CD4-positive, alpha-beta T cell (primary cell): ENCODE measurements at regions of chr11 and their contacts with region 1.

Region 1: GRCh38 chr11:9613118-9613829 is 39.8 kb downstream of the WEE1 start:
- DNase-seq: peak; percentile 74 to 90 (median 82)
- ATAC-seq: peak; percentile 46
- H3K4me3 ChIP-seq: peak overlapping the region; percentile 66
- H3K4me3 Mint-ChIP-seq: peak overlapping the region; percentile 95
- H3K27ac ChIP-seq: peak overlapping the region; percentile 71 to 86
- H3K27ac Mint-ChIP-seq: peak overlapping the region; percentile 89
- H3K4me1 ChIP-seq: peaks cover 19% of the 10 kb centered on the region
- H3K4me1 Mint-ChIP-seq: peaks cover 16% of the 10 kb centered on the region
- H3K27me3 ChIP-seq: no peaks in the 10 kb centered on the region
- H3K27me3 Mint-ChIP-seq: no peaks in the 10 kb centered on the region
- CTCF ChIP-seq: peak; percentile 84

Region 2: DNA sequence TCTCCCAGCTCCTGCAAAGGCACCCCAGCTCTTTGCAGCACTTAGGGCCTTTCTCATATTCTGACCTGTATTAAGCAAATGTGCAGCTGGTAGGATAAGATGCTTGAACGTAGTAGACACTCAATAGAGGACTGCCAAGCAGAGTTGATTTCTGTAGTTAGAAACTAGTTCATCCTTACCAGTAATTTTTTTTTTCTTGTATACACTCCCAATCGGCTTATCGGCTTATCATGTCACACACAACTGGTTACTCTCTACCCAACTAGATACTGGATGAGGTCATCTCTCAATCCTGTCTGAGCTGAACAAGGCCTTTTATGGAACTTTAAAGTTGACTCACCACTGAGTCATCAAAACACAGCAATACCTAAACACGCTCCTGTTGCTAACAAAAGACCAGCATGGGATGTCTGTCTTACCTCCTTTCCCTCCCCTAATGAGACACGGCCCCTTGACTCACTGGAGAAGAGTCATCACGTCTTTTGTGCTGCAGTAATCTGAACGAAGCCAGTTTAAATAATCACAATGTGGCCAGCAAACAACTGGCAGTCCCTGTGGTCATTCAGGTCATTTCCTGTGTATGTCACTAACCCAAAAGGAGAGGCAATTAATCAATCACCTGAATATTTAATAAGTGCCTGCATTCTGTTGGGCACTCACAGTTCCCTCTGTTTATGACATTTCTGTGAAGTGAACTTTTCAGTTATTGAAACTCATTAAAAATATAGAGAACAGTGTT is 47.3 kb before region 1 on chr11:
- CTCF ChIA-PET with region 1: interaction called, 31 read pairs
- POLR2A ChIA-PET with region 1: no interaction called
- intact Hi-C with region 1: no loop called
- DNase-seq: peak in 9 of 14 experiments; percentile 15 to 82 (median 27)
- ATAC-seq: peak; percentile 80
- H3K4me3 ChIP-seq: no peak overlapping the region
- H3K4me3 Mint-ChIP-seq: no peak overlapping the region
- H3K27ac ChIP-seq: no peak overlapping the region
- H3K27ac Mint-ChIP-seq: peak overlapping the region; percentile 62
- H3K4me1 ChIP-seq: peaks cover 9% of the 10 kb centered on the region
- H3K4me1 Mint-ChIP-seq: peaks cover 25% of the 10 kb centered on the region
- H3K27me3 ChIP-seq: no peaks in the 10 kb centered on the region
- H3K27me3 Mint-ChIP-seq: no peaks in the 10 kb centered on the region
- CTCF ChIP-seq: no peak

Region 3: DNA sequence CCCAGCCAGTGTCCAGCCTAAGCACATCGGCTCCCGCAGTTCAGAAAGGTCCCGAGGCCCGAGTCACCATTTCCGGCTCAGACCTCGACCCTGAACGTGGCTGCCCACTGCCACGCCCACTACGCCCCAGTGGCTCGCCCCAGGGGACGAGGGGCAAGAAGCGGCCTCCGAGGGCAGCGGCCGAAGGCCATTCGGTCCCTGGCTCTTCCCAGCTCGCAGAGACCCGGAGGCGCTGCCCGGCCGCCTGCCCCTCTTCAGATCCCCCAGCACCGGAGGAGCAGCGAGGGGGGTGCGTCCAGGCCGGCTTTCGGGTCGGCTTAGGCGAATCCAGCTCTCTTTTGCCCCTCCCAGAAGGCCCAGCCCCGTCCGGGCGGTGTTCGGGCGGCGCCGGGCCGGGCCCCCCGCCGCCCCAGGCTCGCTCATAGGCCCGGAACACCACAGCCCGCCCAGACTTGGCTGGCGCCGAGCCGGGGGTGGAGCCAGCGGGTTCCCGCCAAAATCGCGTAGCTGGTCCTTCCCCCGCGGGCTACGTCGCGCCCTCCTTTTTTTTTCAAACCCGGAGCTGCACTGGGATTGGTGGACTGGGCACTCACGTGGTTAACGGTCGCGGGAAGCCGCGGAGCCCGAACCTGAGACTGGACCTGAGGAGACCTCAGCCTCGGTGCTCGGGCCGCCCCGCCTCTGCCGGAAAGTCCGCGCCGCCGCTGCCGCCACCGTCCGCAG is 40.1 kb before region 1 on chr11 and contains the start of gene WEE1:
- CTCF ChIA-PET with region 1: interaction called, 44 read pairs
- POLR2A ChIA-PET with region 1: interaction called, 38 read pairs
- intact Hi-C with region 1: loop called (anchors 2 kb)
- DNase-seq: peak; percentile 85 to 98 (median 94)
- ATAC-seq: peak; percentile 89
- H3K4me3 ChIP-seq: peak within 1 kb of the TSS; percentile 96
- H3K4me3 Mint-ChIP-seq: peak within 1 kb of the TSS; percentile 90
- H3K27ac ChIP-seq: peak within 1 kb of the TSS in 1 of 2 donors; percentile 69
- H3K27ac Mint-ChIP-seq: peak within 1 kb of the TSS; percentile 64
- H3K4me1 ChIP-seq: peaks cover 32% of the 10 kb centered on the region
- H3K4me1 Mint-ChIP-seq: peaks cover 46% of the 10 kb centered on the region
- H3K27me3 ChIP-seq: no peaks in the 10 kb centered on the region
- H3K27me3 Mint-ChIP-seq: peaks cover 15% of the 10 kb centered on the region
- CTCF ChIP-seq: no peak
- total RNA-seq, gene WEE1: 9.3 to 10.7 TPM

Region 4: DNA sequence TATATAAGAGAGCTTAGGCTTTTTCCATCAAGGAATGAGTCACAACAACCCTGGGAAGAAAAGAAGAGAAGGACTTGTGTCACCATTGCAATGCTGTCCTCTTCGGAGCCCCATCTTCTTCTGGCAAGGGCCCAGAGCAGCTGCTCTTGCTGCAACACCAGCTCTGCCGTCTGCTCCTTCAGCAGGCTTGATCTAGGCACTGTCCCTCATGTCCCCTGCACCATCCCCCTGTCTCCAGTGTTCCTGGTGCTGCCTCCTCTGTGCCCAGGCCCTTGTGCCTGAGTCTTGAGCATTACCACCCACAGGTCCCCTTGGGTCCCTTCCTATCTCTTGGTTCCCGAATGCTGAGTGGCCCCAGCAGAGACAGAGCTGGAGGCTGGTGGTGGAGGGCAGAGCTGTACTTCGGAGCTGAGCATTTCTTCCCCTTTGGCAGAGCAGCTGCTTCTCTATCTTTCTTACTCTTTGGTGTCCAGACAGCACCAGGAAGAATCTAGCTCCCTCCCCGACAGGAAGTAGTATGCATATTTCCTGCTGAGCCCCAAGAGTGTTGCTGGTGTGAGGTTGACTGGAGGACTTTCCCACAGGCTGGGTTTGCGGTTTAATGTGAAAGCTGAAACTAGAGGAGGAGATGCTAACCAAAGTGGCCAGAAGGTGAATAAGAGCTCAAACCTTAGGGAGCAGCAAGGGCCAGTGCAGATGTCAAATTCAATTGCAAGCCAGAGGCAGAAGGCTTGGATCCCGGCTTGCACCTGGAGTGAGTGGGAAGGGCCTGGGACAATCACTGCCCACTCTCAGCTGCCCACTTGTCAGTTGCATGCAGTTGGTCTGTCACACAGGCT is 12.0 kb before region 1 on chr11:
- CTCF ChIA-PET with region 1: interaction called, 8 read pairs
- POLR2A ChIA-PET with region 1: interaction called, 15 read pairs
- intact Hi-C with region 1: no loop called
- DNase-seq: peak; percentile 7 to 87 (median 32)
- ATAC-seq: peak; percentile 85
- H3K4me3 ChIP-seq: peak overlapping the region; percentile 36
- H3K4me3 Mint-ChIP-seq: peak overlapping the region; percentile 51
- H3K27ac ChIP-seq: peak overlapping the region; percentile 24 to 51
- H3K27ac Mint-ChIP-seq: peak overlapping the region; percentile 87
- H3K4me1 ChIP-seq: peaks cover 21% of the 10 kb centered on the region
- H3K4me1 Mint-ChIP-seq: peaks cover 16% of the 10 kb centered on the region
- H3K27me3 ChIP-seq: no peaks in the 10 kb centered on the region
- H3K27me3 Mint-ChIP-seq: no peaks in the 10 kb centered on the region
- CTCF ChIP-seq: no peak

Region 5: DNA sequence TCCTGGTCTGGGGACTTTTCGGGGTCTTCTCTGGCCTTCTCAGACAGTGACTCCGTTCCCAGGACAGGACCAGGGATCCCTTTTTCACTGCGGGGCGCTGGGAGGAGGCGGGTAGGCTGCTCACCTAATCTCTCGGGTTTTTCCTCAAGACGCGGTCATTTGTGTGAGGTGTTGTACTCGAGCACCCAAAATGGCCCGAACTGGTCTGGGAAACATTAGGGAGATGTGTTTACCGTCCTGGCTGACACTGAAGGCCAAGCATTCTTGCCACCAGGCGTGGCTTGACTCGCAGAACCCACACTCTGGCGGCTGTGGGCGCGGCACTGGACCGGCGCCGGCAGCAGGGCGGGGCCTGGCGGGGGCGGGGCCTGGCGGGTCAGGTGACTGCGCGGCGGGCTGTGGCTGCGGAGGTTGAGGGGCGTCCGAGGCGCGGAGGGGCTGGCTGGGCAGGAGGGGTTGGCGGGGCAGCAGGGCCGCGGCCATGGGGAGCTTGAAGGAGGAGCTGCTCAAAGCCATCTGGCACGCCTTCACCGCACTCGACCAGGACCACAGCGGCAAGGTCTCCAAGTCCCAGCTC is 50.5 kb after region 1 on chr11 and contains the start of gene SWAP70:
- CTCF ChIA-PET with region 1: interaction called, 3 read pairs
- POLR2A ChIA-PET with region 1: no interaction called
- intact Hi-C with region 1: loop called (anchors 2 to 5 kb)
- DNase-seq: peak; percentile 36 to 80 (median 68)
- ATAC-seq: peak; percentile 86
- H3K4me3 ChIP-seq: peak within 1 kb of the TSS; percentile 86
- H3K4me3 Mint-ChIP-seq: peak within 1 kb of the TSS; percentile 84
- H3K27ac ChIP-seq: no peak within 1 kb of the TSS
- H3K27ac Mint-ChIP-seq: peak within 1 kb of the TSS; percentile 4
- H3K4me1 ChIP-seq: peaks cover 19% of the 10 kb centered on the region
- H3K4me1 Mint-ChIP-seq: peaks cover 11% of the 10 kb centered on the region
- H3K27me3 ChIP-seq: peaks cover 6 to 11% of the 10 kb centered on the region in 2 experiments
- H3K27me3 Mint-ChIP-seq: peaks cover 30% of the 10 kb centered on the region
- CTCF ChIP-seq: no peak
- total RNA-seq, gene SWAP70: 4.0 to 4.1 TPM

Region 6: DNA sequence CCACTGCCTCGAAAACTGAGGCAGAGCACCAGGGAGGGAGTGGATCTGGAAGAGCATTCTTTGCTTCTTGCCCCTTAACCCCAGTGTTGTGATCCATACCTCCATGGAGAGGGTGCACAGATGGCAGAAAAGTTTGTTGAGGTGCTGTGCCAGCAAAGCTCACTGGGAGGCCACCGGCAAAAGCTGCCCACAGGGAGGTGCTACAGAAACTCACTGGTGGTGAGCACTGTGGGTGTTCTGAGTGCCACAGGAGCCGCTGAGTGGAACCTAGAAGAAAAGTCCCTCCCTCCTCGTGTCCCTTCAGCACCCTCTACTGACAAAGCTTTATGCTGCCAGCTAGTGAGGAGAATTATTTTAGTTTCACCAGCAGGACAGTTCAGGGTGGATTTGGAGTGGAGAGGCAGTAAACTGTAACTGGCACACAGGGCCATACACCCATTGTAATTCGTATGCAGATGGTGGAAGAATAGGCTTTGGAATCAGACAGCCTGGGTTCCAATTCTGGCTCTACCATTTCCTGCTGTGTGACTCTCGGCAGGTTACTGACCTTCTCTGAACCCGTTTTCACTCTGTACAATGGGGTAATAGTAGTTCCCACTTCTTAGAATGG is 135.2 kb after region 1 on chr11:
- CTCF ChIA-PET with region 1: interaction called, 4 read pairs
- POLR2A ChIA-PET with region 1: interaction called, 9 read pairs
- intact Hi-C with region 1: loop called (anchors 1 to 2 kb)
- DNase-seq: peak in 12 of 14 experiments; percentile 20 to 80 (median 46)
- ATAC-seq: peak; percentile 99
- H3K4me3 ChIP-seq: no peak overlapping the region
- H3K4me3 Mint-ChIP-seq: no peak overlapping the region
- H3K27ac ChIP-seq: no peak overlapping the region
- H3K27ac Mint-ChIP-seq: no peak overlapping the region
- H3K4me1 ChIP-seq: peaks cover 3% of the 10 kb centered on the region
- H3K4me1 Mint-ChIP-seq: no peaks in the 10 kb centered on the region
- H3K27me3 ChIP-seq: no peaks in the 10 kb centered on the region
- H3K27me3 Mint-ChIP-seq: no peaks in the 10 kb centered on the region
- CTCF ChIP-seq: peak; percentile 53

Region 7: DNA sequence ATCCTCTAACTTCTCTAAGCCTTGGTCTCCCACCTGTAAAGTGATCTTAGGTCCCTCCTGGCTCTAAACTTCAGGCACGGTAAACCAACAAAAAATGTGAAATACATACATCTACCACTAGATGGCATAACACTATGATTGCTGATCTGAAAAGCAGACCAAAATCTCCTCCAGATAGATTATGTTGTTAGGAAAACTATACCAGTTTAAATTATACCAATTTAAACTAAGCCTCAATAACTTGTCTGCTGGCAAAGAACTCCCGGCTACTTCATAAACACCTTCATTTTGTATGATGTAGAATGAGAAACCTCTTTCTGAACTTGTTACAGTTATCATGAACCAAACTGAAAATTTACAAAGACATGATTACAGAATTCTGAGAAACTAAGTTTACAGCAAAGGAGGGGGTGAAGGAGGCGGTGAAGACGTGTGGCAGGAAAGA is 594.9 kb after region 1 on chr11:
- CTCF ChIA-PET with region 1: no interaction called
- POLR2A ChIA-PET with region 1: no interaction called
- intact Hi-C with region 1: no loop called
- DNase-seq: peak in 3 of 14 experiments; percentile 57 to 71 (median 70)
- ATAC-seq: peak; percentile 66
- H3K4me3 ChIP-seq: no peak overlapping the region
- H3K4me3 Mint-ChIP-seq: no peak overlapping the region
- H3K27ac ChIP-seq: no peak overlapping the region
- H3K27ac Mint-ChIP-seq: no peak overlapping the region
- H3K4me1 ChIP-seq: no peaks in the 10 kb centered on the region
- H3K4me1 Mint-ChIP-seq: no peaks in the 10 kb centered on the region
- H3K27me3 ChIP-seq: no peaks in the 10 kb centered on the region
- H3K27me3 Mint-ChIP-seq: no peaks in the 10 kb centered on the region
- CTCF ChIP-seq: peak; percentile 77